Activated CD4-positive, alpha-beta T cell treated with anti-CD3 and anti-CD28 coated beads, Interleukin-2, amount 10 ng/mL, durations not matched to agents 7 days and 5 days (primary cell): ENCODE measurements at regions of chr1 and their contacts with region 1.

Region 1: GRCh38 chr1:235105051-235106043 is 23.3 kb downstream of the TOMM20 start:
- DNase-seq: peak; percentile 30
- H3K4me3 Mint-ChIP-seq: peak overlapping the region; percentile 44
- H3K27ac Mint-ChIP-seq: peak overlapping the region; percentile 83
- H3K4me1 Mint-ChIP-seq: peaks cover 56% of the 10 kb centered on the region
- H3K27me3 Mint-ChIP-seq: peaks cover 4% of the 10 kb centered on the region

Region 2: DNA sequence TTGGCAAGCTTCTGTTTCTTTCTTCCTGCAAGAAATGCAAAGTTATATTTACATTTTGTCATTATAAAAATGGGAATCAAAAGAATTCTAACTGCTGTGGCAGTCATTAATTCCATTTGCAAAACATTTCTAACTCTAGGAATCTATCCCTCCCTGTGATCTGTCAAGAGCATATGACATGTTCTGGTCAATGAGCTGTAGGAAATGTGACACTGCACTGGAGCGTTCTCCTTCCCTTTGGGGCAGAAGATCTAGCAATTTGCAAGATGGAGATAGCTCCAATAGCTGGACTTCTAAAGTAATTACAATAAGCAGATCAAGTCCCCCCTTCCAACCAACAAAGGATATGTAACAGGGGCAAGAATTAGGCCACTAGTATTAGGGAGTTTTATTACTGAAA is 17.0 kb after region 1 on chr1:
- CTCF ChIA-PET with region 1: interaction called, 32 read pairs
- POLR2A ChIA-PET with region 1: interaction called, 4 read pairs
- DNase-seq: no peak
- H3K4me3 Mint-ChIP-seq: no peak overlapping the region
- H3K27ac Mint-ChIP-seq: no peak overlapping the region
- H3K4me1 Mint-ChIP-seq: peaks cover 50% of the 10 kb centered on the region
- H3K27me3 Mint-ChIP-seq: no peaks in the 10 kb centered on the region

Region 3: GRCh38 chr1:235147269-235147668 is 41.9 kb after region 1 on chr1:
- CTCF ChIA-PET with region 1: no interaction called
- POLR2A ChIA-PET with region 1: no interaction called
- DNase-seq: no peak
- H3K4me3 Mint-ChIP-seq: no peak overlapping the region
- H3K27ac Mint-ChIP-seq: no peak overlapping the region
- H3K4me1 Mint-ChIP-seq: peaks cover 17% of the 10 kb centered on the region
- H3K27me3 Mint-ChIP-seq: no peaks in the 10 kb centered on the region